Calu3 (cell line): ENCODE measurements at regions of chr3 and their contacts with region 1.

Region 1: GRCh38 chr3:152026033-152026556 is 152.7 kb downstream of the SUCNR1 start:
- DNase-seq: peak; percentile 25
- H3K4me3 Mint-ChIP-seq: no peak overlapping the region
- H3K27ac Mint-ChIP-seq: peak overlapping the region; percentile 82
- H3K4me1 Mint-ChIP-seq: peaks cover 56% of the 10 kb centered on the region
- H3K27me3 Mint-ChIP-seq: no peaks in the 10 kb centered on the region
- CTCF ChIP-seq: no peak

Region 2: DNA sequence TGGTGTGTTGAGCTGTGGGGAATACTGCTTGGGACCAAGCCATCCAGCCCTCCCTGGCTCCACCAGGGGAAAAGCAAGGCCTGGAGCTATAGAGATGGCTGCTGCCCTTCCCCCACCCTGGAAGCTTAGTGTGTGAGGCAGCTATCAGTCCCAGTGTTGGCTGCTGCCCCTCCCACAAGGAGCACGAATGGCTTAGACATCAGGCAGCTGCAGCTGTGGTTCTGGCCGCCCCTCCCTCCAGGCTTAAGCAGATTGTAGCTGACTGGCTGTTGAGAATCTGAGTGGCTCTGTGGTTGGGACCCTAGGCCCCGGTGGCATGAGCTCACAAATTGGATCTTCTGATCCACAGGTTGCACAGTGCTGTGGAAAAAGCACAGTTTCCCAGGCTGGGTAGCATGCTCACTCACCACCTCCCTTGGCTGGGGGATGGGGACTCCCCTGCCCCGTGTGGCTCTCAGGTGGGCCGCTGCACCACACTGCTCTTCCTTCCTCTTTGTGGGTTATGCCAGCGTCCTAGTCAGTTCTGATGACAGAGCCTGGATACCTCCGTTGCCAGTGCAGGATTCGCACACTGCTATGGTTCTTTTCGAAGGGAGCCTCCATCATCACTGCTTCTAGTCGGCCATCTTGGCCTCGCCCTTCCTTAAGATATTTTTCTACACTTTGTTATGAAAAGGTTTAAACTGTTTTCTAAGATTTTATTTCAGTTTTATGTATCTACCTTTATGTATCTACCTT is 173.9 kb before region 1 on chr3:
- CTCF ChIA-PET with region 1: no interaction called
- intact Hi-C with region 1: loop called (anchors 5 kb)
- DNase-seq: no peak
- H3K4me3 Mint-ChIP-seq: no peak overlapping the region
- H3K27ac Mint-ChIP-seq: no peak overlapping the region
- H3K4me1 Mint-ChIP-seq: peaks cover 21% of the 10 kb centered on the region
- H3K27me3 Mint-ChIP-seq: no peaks in the 10 kb centered on the region
- CTCF ChIP-seq: no peak

Region 3: DNA sequence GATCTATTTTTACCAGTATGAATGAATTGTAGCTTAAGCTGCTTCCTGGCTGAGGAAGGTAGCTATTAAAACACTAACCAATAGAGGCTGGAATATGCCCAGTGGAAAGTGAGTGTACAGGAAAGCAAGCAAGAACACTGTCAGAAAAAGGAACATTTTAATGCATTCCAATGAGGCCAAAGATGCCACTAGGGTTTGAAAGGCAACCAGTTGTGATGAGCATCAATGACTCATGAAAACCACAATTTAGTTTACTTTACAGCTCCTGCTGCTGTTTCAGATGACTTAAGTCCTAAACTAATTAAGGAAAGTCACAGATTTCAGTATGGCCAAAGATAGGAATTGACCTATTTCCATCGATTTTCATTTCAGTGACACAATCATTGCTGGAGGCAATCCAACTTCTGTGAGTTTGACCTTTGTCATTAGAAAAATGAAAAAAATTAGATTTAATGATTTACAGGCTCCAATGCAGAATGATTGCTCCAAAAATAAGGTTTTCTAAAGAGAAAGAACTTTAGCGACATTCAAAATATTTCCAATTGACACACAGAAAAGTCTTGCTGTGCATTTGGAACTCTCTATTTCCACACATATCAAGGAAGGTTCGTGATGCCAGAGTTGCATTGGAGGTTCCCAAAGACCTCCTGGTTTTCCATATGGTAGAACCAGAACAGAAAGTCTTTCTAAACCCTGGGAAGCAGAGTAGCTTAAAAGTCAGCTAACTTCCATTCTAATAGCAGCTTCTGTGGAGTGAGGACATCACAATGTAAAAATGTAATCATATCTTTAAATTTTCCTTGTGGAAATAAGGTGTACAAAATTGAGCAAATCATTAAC is 49.7 kb before region 1 on chr3:
- CTCF ChIA-PET with region 1: interaction called, 3 read pairs
- intact Hi-C with region 1: loop called (anchors 2 kb)
- DNase-seq: peak; percentile 50
- H3K4me3 Mint-ChIP-seq: peak overlapping the region; percentile 39
- H3K27ac Mint-ChIP-seq: peak overlapping the region; percentile 53
- H3K4me1 Mint-ChIP-seq: peaks cover 50% of the 10 kb centered on the region
- H3K27me3 Mint-ChIP-seq: no peaks in the 10 kb centered on the region
- CTCF ChIP-seq: no peak

Region 4: DNA sequence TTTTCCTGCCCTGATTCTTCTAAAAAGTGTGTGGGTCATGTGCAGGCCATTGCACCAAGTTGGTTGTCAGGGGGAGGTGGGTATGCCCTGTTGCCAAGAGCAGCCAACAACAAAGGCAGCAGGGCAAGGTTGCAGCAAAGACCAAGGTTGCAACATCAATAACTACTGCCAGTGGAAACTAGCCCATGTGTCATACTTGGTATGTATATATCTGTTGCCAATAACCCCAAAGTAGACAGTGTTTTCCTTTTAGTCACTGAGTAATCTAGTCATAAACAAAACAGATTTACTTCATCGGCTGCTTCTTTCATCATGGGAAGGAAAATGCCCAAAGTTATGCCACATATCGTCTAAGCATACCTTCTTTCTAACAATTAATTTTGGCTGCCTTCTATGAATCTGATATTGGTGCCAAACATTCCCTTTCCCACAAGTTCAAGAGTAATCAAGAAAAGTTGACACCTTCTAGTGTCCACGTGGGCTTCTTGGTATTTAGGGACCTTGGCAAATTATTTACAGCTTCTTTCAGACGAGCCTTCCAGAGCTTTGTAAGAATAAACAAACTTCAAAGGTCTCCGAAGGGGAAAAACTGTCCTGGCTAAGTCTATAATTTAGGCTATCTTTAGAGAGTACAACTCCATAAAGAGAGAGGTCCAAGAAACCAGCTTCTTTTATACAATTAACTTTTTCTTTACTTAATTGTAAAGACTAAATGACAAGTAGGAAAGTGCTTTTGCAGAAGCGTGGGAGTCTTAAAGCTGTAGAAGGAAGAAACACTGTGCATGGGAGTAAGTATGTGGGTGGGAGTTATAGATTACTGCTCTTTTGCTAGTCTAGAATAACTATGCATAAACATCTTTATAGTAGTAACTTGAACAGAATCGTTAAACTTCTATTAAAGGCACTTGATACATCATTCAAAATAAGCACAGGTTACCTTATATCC is 232.6 kb after region 1 on chr3:
- CTCF ChIA-PET with region 1: no interaction called
- intact Hi-C with region 1: no loop called
- DNase-seq: peak; percentile 85
- H3K4me3 Mint-ChIP-seq: peak overlapping the region; percentile 25
- H3K27ac Mint-ChIP-seq: peak overlapping the region; percentile 80
- H3K4me1 Mint-ChIP-seq: peaks cover 30% of the 10 kb centered on the region
- H3K27me3 Mint-ChIP-seq: no peaks in the 10 kb centered on the region
- CTCF ChIP-seq: no peak